BJ (cell line): ENCODE measurements at regions of chr10 and their contacts with region 1.

Region 1: DNA sequence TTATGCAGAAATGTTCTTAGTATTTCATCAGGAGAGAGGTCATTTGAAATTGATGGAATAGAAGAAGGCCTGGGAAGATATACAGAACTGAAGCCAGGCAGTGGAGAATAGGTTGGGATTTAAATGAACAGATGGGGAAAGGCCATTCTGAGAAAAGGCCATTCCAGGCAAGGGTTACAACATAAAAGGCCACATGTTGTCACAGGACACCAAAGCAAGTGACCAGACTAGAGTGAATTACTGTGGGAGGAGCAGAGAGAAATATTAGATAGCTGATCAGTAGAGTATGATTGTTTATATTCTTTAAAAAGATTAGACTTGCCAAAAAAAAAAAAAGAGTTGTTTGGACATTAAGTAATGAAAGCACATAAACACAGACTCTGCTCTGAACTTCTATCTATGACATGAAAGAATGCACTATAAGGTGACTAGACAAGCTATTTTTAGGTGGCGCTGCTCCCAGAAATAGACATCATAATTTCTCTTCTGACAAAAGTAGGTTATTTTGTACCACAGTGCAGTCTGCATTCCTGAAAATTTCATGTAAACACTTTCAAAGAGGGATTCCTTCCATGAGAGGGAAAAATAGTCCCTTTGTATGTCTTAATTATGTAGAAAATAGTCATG is 55.2 kb upstream of the DKK1 start:
- DNase-seq: no peak
- H3K4me3 ChIP-seq: no peak overlapping the region
- H3K27me3 ChIP-seq: no peaks in the 10 kb centered on the region
- CTCF ChIP-seq: no peak

Region 2: GRCh38 chr10:51020200-51020599 is 1238.7 kb before region 1 on chr10:
- CTCF ChIA-PET with region 1: no interaction called
- POLR2A ChIA-PET with region 1: interaction called, 11 read pairs
- DNase-seq: no peak
- H3K4me3 ChIP-seq: no peak overlapping the region
- H3K27me3 ChIP-seq: no peaks in the 10 kb centered on the region
- CTCF ChIP-seq: no peak

Region 3: GRCh38 chr10:52172581-52172980 is 86.3 kb before region 1 on chr10:
- CTCF ChIA-PET with region 1: no interaction called
- POLR2A ChIA-PET with region 1: no interaction called
- DNase-seq: no peak
- H3K4me3 ChIP-seq: no peak overlapping the region
- H3K27me3 ChIP-seq: no peaks in the 10 kb centered on the region
- CTCF ChIP-seq: no peak

Region 4: GRCh38 chr10:52578871-52579405 is 320.0 kb after region 1 on chr10:
- CTCF ChIA-PET with region 1: no interaction called
- POLR2A ChIA-PET with region 1: no interaction called
- DNase-seq: no peak
- H3K4me3 ChIP-seq: no peak overlapping the region
- H3K27me3 ChIP-seq: no peaks in the 10 kb centered on the region
- CTCF ChIP-seq: no peak